Thyroid gland (tissue), 4 donors: ENCODE measurements at regions of chr1 and their contacts with region 1.

Region 1: DNA sequence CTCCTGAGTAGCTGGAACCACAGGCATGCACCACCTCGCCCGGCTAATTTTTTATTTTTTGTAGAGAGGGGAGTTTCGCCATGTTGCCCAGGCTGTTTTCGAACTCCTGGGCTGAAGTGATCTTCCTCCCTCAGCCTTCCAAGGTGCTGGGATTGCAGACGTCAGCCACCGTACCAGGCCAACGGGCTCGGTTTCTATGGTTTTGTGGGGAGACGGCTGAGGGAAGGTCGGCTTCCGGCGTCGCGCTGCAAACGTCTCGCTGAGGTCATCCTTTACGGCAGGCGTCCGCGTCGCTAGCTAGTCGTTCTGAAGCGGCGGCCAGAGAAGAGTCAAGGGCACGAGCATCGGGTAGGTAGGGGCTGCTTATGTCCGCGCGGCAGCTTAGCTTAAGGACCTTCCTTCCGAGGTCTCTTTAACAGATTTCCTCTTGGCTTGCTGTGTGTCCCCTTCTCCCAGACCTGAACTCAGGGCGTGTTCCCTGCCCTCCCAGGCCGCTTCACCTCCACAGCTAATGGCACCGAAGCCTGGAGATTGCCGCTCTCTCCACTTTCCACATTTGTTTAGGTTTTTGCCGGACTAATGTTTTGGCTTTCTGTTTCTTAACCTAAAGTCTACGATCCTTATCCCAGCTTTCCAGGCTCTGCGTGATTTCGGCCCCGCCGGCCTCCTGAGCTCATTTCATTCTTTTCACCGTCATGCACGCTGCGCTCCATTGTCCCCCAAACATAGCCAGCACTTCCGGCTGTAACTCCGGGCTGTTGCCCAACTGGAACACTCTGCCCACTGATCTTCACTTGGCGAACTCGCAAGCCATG is at the start of gene NDUFS5:
- DNase-seq: peak; percentile 93 to 94
- H3K4me3 ChIP-seq: peak within 1 kb of the TSS; percentile 76 to 92 (median 79)
- H3K27ac ChIP-seq: peak within 1 kb of the TSS; percentile 91 to 96 (median 96)
- H3K4me1 ChIP-seq: peaks cover 5 to 12% of the 10 kb centered on the region in 2 donors
- H3K27me3 ChIP-seq: no peaks in the 10 kb centered on the region
- CTCF ChIP-seq: no peak
- POLR2A ChIP-seq: peak; percentile 9 to 84
- total RNA-seq, gene NDUFS5: 428 to 631 (median 514) TPM

Region 2: GRCh38 chr1:38873027-38873969 is 153.0 kb before region 1 on chr1 and contains the start of gene MYCBP:
- intact Hi-C with region 1: loop called (anchors 5 kb)
- DNase-seq: peak; percentile 96 to 97
- H3K4me3 ChIP-seq: peak within 1 kb of the TSS; percentile 5 to 71 (median 43)
- H3K27ac ChIP-seq: peak within 1 kb of the TSS; percentile 23 to 44 (median 41)
- H3K4me1 ChIP-seq: peaks cover 12 to 18% of the 10 kb centered on the region in 2 donors
- H3K27me3 ChIP-seq: no peaks in the 10 kb centered on the region
- CTCF ChIP-seq: peak in 2 of 6 experiments; percentile 21 to 36
- POLR2A ChIP-seq: peak in 1 of 2 donors; percentile 74
- total RNA-seq, gene MYCBP: 21.6 to 31.4 (median 24.0) TPM

Region 3: DNA sequence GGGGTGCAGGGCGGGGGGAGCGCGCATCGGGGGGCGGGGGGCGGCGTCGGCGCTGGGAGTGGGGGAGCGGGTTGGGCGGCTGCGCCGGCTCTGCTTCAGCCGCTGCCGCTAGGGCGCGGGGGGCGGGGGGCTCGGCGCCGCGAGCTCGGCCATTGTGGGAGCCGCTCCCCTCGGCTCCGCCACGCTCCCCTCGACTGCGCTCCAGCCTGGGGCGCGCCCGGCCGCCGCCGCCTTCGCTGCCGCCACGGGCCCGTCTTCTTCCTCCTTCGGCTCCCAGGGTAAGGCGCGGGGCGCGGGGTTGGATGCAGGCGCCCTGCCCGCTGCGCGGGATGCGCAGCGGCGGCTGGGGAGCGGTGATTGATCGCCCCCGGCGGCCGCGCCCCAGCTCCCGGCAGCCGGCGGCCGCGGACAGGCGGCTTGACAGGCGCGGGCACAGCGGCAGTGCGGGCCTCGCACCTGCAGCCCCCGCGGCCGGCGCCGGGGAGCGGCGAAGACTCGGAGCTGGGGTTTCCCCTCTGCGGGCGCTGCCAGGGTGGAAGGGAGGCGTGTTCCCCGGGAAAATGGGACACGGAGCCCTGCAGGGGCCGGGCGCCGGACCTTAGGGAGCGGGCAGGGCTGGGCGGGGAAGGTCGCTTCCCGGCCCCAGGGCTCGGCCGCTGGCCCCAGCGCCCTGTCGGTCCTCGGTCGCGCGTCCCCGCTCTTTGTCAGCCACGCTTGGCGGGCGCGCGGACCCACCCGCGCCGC is 55.2 kb after region 1 on chr1:
- intact Hi-C with region 1: no loop called
- DNase-seq: peak in 1 of 2 donors; percentile 18
- H3K4me3 ChIP-seq: peak overlapping the region in 1 of 3 donors; percentile 48
- H3K27ac ChIP-seq: no peak overlapping the region
- H3K4me1 ChIP-seq: peaks cover 0 to 19% of the 10 kb centered on the region in 2 donors
- H3K27me3 ChIP-seq: no peaks in the 10 kb centered on the region
- CTCF ChIP-seq: no peak
- POLR2A ChIP-seq: no peak

Region 4: DNA sequence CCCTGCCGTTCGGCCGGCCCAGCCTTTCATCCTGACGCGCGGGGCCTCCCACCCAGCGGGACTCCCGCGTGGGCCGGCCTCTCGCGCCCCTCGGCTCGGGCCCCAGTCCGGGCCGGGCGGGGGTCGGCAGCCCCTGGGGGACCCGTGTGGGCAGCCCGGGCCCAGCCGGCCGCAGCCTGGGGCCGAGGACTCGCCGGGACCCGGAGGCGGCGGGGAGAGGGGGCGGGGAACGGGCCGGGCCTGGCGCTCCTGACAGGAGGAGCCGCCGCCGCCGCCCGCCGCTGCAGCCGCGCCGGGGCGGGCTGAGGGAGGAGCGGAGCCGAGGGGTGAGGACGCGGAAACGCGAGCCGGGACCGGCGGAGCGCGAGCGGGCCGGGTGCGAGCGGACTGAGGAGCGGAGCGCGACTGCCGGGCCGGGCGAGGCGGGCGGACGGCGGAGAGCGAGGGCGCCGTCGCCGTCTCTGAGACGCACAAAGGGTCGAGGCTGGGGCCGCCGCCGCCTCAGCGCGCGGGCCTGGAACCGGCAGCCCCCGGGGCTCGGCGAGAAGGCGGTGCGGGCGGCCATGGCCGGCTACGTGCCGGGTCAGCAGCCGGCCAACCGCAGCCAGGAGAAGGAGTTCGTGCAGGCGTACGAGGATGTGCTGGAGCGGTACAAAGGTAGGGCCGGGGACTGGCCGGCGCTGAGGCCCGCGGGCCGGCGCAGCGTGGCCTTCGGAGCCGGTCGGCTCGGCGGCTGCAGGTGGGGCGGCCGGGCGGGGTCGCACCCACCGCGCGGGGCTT is 79.0 kb after region 1 on chr1:
- intact Hi-C with region 1: no loop called
- DNase-seq: peak; percentile 84 to 86
- H3K4me3 ChIP-seq: peak overlapping the region; percentile 42 to 89 (median 84)
- H3K27ac ChIP-seq: peak overlapping the region; percentile 95 to 98 (median 97)
- H3K4me1 ChIP-seq: peaks cover 50 to 55% of the 10 kb centered on the region in 2 donors
- H3K27me3 ChIP-seq: no peaks in the 10 kb centered on the region
- CTCF ChIP-seq: peak in 1 of 6 experiments; percentile 1
- POLR2A ChIP-seq: peak; percentile 68 to 91